PC-3 (cell line): ENCODE measurements at regions of chr12 and their contacts with region 1.

Region 1: DNA sequence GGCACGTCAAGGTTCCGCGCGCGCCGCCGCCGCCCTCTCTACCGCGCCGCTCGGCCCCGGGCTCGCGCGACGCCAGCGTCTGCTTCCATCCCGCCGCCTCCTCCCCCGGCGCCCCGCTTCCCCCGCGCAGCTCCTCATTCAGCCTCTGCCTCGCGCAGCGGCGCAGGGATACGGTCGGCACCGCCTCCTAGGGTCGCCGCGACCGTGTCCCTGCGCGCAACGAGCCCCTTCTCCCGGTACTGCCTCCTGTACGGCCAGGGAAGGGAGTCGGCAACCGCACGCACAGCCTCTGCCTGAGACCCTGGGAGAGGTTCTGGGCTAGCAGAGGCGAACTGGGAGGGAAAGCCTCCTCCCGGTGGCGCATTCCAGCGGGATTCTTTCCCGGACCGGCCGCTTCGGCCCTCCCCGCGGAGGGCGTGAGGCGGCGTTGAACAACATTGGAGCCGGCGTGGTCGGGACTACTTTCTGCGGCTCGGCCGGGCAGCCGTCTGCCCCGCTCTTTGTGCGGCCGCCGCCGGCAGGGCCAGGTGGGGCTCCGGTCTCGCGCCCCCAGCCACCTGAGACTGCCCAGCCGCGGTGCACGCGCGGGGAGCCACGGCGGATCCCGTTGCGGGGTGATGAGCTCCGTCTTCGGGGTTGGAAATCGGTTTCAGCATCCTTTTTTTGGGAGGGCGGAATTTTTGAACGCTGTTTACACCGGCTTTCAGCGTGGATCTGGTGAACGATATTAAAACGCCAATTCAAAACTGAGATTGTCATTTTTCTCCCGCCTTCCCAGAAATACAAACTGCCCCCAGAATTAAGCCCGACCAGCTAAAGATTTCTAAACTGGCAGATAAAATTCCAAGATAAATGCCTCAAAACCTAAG is at the start of gene LRP6:
- DNase-seq: peak; percentile 81
- ATAC-seq: peak; percentile 83
- H3K4me3 ChIP-seq: peak within 1 kb of the TSS; percentile 74
- H3K27ac ChIP-seq: peak within 1 kb of the TSS; percentile 79
- H3K4me1 ChIP-seq: peaks cover 16% of the 10 kb centered on the region
- H3K27me3 ChIP-seq: no peaks in the 10 kb centered on the region
- CTCF ChIP-seq: no peak
- total RNA-seq, gene LRP6: 15.5 and 17.3 TPM in 2 replicates

Region 2: DNA sequence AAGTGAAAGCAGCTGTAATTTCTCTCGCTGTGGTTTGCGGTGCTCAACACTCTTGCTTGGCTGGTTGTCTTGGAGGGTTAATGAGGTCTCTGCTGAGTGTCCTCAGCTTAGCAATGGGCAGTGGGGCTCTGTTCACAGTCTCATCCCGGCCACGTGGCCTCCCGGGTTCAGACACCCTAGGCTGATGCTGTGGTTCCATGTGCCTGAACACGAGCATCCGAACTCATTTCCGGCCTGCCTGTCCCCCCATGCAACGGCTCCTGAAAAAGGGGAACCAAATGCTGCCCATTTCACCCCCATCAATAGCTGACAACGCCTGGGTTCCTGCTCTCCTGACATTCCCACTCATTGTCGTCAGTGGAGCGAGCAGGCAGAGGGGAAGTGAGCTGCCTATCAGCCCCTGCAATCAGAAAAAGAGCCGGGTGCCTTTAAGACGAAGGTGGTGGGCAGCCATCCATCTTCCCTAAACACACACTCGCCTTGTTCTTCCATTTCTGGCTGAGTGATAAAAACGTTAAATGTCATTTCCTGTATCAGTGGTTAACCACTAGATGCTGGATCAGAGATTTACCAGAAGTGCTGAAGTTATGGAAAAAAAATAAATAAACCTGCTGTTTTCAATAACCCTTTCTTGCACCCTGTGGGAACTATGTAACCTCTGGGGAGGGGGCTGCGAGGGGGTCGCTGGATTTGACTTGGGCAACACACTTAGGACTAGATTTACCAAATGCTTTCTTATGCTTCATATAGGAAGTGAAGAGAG is 256.6 kb before region 1 on chr12:
- CTCF ChIA-PET with region 1: no interaction called
- POLR2A ChIA-PET with region 1: no interaction called
- intact Hi-C with region 1: no loop called
- DNase-seq: peak; percentile 54
- ATAC-seq: peak; percentile 37; the same call in 1 of the 2 replicates
- H3K4me3 ChIP-seq: no peak overlapping the region
- H3K27ac ChIP-seq: peak overlapping the region; percentile 83
- H3K4me1 ChIP-seq: peaks cover 47% of the 10 kb centered on the region
- H3K27me3 ChIP-seq: no peaks in the 10 kb centered on the region
- CTCF ChIP-seq: no peak

Region 3: DNA sequence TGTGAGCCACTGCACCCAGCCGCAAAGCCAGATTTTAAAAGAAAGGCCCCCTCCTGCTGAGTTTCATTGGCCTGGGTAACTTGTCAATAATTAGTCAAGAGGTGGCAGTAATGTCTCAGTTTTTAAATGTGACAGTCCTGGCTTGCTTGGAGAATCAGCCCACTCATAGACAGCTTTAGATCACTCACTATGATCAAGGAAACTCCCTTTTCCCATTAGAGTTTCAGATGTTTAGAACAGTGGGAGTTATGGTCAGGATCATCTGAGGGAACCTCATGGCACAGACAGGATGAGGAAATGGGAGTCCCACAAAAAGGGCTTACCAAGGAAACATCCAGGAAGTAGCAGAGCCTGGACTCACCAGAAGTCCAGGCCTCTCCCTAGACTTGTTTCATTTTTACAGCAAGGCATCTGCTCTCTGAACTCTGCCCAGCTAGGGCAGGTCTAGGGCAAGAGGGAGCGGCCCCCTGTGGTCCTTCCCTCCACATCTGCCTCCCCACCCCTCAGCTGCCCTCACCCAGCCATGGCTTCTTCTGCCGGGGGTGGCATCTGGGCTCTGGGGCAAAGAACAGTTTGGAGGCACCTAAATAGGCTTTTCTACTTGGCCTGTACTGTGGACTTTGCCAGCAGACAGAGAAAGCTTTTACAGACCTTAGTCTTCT is 185.1 kb before region 1 on chr12:
- CTCF ChIA-PET with region 1: no interaction called
- POLR2A ChIA-PET with region 1: no interaction called
- intact Hi-C with region 1: loop called (anchors 5 kb)
- DNase-seq: peak; percentile 52
- ATAC-seq: peak; percentile 83
- H3K4me3 ChIP-seq: no peak overlapping the region
- H3K27ac ChIP-seq: no peak overlapping the region
- H3K4me1 ChIP-seq: peaks cover 5% of the 10 kb centered on the region; the same call in 1 of the 2 replicates
- H3K27me3 ChIP-seq: no peaks in the 10 kb centered on the region
- CTCF ChIP-seq: peak; percentile 51

Region 4: DNA sequence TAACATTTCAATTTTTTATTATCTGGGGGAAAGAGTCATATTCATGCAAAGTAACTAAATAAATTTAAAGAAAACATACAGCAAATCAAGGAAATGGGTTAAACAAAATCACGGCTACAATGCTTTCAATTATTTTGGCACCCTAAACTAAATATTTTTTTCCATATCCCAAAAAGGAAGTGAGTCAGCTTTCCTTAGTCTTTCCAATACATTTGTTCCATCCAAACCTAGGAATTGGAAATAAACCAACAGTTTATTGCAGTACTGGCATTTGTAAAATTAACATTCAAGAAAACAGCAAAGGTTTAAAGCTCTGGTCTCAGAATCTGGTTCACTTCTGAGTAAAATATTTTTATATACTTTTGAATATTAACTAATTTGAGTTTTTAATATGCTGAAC is 107.1 kb before region 1 on chr12:
- CTCF ChIA-PET with region 1: no interaction called
- POLR2A ChIA-PET with region 1: no interaction called
- intact Hi-C with region 1: loop called (anchors 10 kb)
- DNase-seq: peak; percentile 13
- ATAC-seq: peak; percentile 45
- H3K4me3 ChIP-seq: no peak overlapping the region
- H3K27ac ChIP-seq: no peak overlapping the region
- H3K4me1 ChIP-seq: peaks cover 9% of the 10 kb centered on the region; the same call in 1 of the 2 replicates
- H3K27me3 ChIP-seq: no peaks in the 10 kb centered on the region
- CTCF ChIP-seq: no peak

Region 5: GRCh38 chr12:12315838-12316237 is 48.7 kb after region 1 on chr12:
- CTCF ChIA-PET with region 1: no interaction called
- POLR2A ChIA-PET with region 1: interaction called, 11 read pairs
- intact Hi-C with region 1: no loop called
- DNase-seq: no peak
- ATAC-seq: no peak
- H3K4me3 ChIP-seq: no peak overlapping the region
- H3K27ac ChIP-seq: no peak overlapping the region
- H3K4me1 ChIP-seq: no peaks in the 10 kb centered on the region
- H3K27me3 ChIP-seq: no peaks in the 10 kb centered on the region
- CTCF ChIP-seq: no peak